Activated CD8-positive, alpha-beta memory T cell treated with anti-CD3 and anti-CD28 coated beads, Interleukin-2, amount 10 ng/mL, durations not matched to agents 7 days and 5 days (primary cell): ENCODE measurements at regions of chr12 and their contacts with region 1.

Region 1: DNA sequence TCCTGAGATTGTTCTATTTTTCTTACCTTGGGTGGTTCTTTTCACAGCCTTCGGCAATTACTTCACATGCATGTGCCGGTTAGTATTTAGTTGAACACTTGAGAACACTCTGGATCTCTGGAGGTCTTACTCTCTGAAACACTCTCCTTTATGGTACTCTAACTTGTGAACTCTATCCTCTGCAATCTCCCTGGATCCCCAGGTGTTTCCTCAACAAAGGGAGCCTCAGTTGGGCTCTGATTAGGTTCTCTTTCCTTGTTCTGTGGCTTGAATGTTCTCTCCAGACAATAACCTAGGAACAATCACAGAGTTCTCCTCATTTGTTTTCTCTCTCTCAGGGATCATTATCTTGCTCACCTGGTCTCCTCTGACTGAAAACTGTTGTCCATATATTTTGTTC is 40.5 kb upstream of the ABCD2 start:
- DNase-seq: no peak
- ATAC-seq: no peak
- H3K4me3 Mint-ChIP-seq: no peak overlapping the region
- H3K27ac Mint-ChIP-seq: no peak overlapping the region
- H3K4me1 Mint-ChIP-seq: peaks cover 11% of the 10 kb centered on the region
- H3K27me3 Mint-ChIP-seq: no peaks in the 10 kb centered on the region

Region 2: GRCh38 chr12:39646963-39647362 is 13.1 kb before region 1 on chr12:
- CTCF ChIA-PET with region 1: interaction called, 13 read pairs
- DNase-seq: no peak
- ATAC-seq: no peak
- H3K4me3 Mint-ChIP-seq: no peak overlapping the region
- H3K27ac Mint-ChIP-seq: no peak overlapping the region
- H3K4me1 Mint-ChIP-seq: peaks cover 20% of the 10 kb centered on the region
- H3K27me3 Mint-ChIP-seq: no peaks in the 10 kb centered on the region